IMR-90 (cell line): ENCODE measurements at regions of chr1 and their contacts with region 1.

Region 1: GRCh38 chr1:203558064-203558760 is 64.3 kb downstream of the OPTC start:
- DNase-seq: peak; percentile 100
- ATAC-seq: peak; percentile 69
- H3K4me3 ChIP-seq: no peak overlapping the region
- H3K27ac ChIP-seq: peak overlapping the region; percentile 92
- H3K4me1 ChIP-seq: peaks cover 35% of the 10 kb centered on the region
- H3K27me3 ChIP-seq: no peaks in the 10 kb centered on the region
- CTCF ChIP-seq: no peak
- POLR2A ChIP-seq: peak; percentile 76
- RAD21 ChIP-seq: peak; percentile 41

Region 2: DNA sequence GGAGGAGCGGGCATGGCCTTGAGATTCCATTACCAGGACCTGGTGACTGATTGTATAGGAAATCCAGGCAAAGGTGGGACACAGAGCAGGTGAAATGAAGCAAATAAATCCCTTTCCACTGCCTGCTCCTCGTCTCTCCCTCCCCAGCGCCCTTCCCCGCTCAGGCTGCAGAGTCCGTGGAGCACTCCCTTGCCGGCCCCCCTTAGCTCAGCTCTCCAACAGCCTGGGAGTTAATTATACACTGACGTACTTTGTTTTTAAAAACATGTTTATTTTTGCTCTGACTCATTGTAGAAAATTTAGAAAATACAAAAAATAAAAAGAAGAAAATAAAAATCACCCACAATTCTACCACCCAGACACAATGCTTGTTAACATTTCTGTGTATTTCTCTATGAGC is 1302.9 kb before region 1 on chr1:
- CTCF ChIA-PET with region 1: no interaction called
- POLR2A ChIA-PET with region 1: no interaction called
- dilution Hi-C with region 1: no loop called
- in situ Hi-C with region 1: no loop called
- intact Hi-C with region 1: no loop called
- DNase-seq: peak; percentile 34
- ATAC-seq: peak; percentile 90
- H3K4me3 ChIP-seq: no peak overlapping the region
- H3K27ac ChIP-seq: no peak overlapping the region
- H3K4me1 ChIP-seq: peaks cover 10% of the 10 kb centered on the region
- H3K27me3 ChIP-seq: peaks cover 36% of the 10 kb centered on the region
- CTCF ChIP-seq: no peak
- POLR2A ChIP-seq: no peak
- RAD21 ChIP-seq: no peak

Region 3: GRCh38 chr1:203504397-203505250 is 53.6 kb before region 1 on chr1:
- CTCF ChIA-PET with region 1: no interaction called
- POLR2A ChIA-PET with region 1: no interaction called
- dilution Hi-C with region 1: no loop called
- in situ Hi-C with region 1: no loop called
- intact Hi-C with region 1: loop called (anchors 2 kb)
- DNase-seq: peak; percentile 80
- ATAC-seq: peak; percentile 80
- H3K4me3 ChIP-seq: no peak overlapping the region
- H3K27ac ChIP-seq: no peak overlapping the region; the same call in 1 of the 2 replicates
- H3K4me1 ChIP-seq: peaks cover 28% of the 10 kb centered on the region
- H3K27me3 ChIP-seq: no peaks in the 10 kb centered on the region
- CTCF ChIP-seq: peak; percentile 83
- POLR2A ChIP-seq: peak; percentile 51; the same call in 1 of the 2 replicates
- RAD21 ChIP-seq: peak; percentile 89

Region 4: GRCh38 chr1:203512830-203513611 is 45.2 kb before region 1 on chr1:
- CTCF ChIA-PET with region 1: no interaction called
- POLR2A ChIA-PET with region 1: no interaction called
- dilution Hi-C with region 1: no loop called
- in situ Hi-C with region 1: no loop called
- intact Hi-C with region 1: loop called (anchors 2 kb)
- DNase-seq: peak; percentile 97
- ATAC-seq: peak; percentile 91
- H3K4me3 ChIP-seq: no peak overlapping the region
- H3K27ac ChIP-seq: peak overlapping the region; percentile 93
- H3K4me1 ChIP-seq: peaks cover 34% of the 10 kb centered on the region
- H3K27me3 ChIP-seq: no peaks in the 10 kb centered on the region
- CTCF ChIP-seq: no peak
- POLR2A ChIP-seq: peak; percentile 6; the same call in 1 of the 2 replicates
- RAD21 ChIP-seq: peak; percentile 48

Region 5: DNA sequence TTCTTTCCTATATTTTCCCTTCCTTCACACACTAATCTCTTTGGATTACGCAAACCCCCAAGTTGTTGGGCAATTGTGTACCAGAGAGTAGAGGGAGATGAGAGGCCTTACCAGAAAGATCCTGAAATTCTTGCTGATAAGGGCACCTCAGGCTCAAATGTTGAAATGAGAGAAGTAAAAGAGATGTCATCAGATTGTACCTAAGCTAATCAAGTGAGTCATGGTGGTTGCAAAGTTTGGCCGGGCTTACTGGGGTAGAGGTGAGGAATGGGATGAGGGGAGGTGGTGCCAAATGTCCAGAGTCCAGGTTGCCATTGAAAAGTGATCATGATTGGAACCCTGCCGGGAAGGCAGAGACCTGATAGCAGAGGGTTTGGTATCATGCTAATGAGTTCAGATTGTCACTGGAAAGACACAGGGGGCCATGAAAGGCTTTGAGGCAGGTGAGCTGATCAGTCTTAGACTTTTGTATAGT is 21.2 kb before region 1 on chr1:
- CTCF ChIA-PET with region 1: interaction called, 3 read pairs
- POLR2A ChIA-PET with region 1: no interaction called
- dilution Hi-C with region 1: no loop called
- in situ Hi-C with region 1: no loop called
- intact Hi-C with region 1: loop called (anchors 2 kb)
- DNase-seq: peak; percentile 89
- ATAC-seq: peak; percentile 33
- H3K4me3 ChIP-seq: no peak overlapping the region
- H3K27ac ChIP-seq: peak overlapping the region; percentile 73
- H3K4me1 ChIP-seq: peaks cover 30% of the 10 kb centered on the region
- H3K27me3 ChIP-seq: no peaks in the 10 kb centered on the region
- CTCF ChIP-seq: no peak
- POLR2A ChIP-seq: no peak
- RAD21 ChIP-seq: peak; percentile 11; the same call in 1 of the 2 replicates

Region 6: GRCh38 chr1:203609979-203610493 is 51.8 kb after region 1 on chr1:
- CTCF ChIA-PET with region 1: interaction called, 3 read pairs
- POLR2A ChIA-PET with region 1: no interaction called
- dilution Hi-C with region 1: no loop called
- in situ Hi-C with region 1: no loop called
- intact Hi-C with region 1: loop called (anchors 2 kb)
- DNase-seq: no peak
- ATAC-seq: no peak
- H3K4me3 ChIP-seq: no peak overlapping the region
- H3K27ac ChIP-seq: no peak overlapping the region
- H3K4me1 ChIP-seq: peaks cover 15% of the 10 kb centered on the region
- H3K27me3 ChIP-seq: no peaks in the 10 kb centered on the region
- CTCF ChIP-seq: no peak
- POLR2A ChIP-seq: no peak
- RAD21 ChIP-seq: no peak

Region 7: GRCh38 chr1:203625628-203626019 is 67.4 kb after region 1 on chr1:
- CTCF ChIA-PET with region 1: interaction called, 3 read pairs
- POLR2A ChIA-PET with region 1: interaction called, 3 read pairs
- dilution Hi-C with region 1: no loop called
- in situ Hi-C with region 1: no loop called
- intact Hi-C with region 1: loop called (anchors 1 kb)
- DNase-seq: no peak
- ATAC-seq: no peak
- H3K4me3 ChIP-seq: no peak overlapping the region
- H3K27ac ChIP-seq: no peak overlapping the region
- H3K4me1 ChIP-seq: peaks cover 17% of the 10 kb centered on the region
- H3K27me3 ChIP-seq: no peaks in the 10 kb centered on the region
- CTCF ChIP-seq: 0 out of 2 replicates have a peak, but pooled peaks have one; percentile 21
- POLR2A ChIP-seq: no peak
- RAD21 ChIP-seq: peak; percentile 33; the same call in 1 of the 2 replicates

Region 8: DNA sequence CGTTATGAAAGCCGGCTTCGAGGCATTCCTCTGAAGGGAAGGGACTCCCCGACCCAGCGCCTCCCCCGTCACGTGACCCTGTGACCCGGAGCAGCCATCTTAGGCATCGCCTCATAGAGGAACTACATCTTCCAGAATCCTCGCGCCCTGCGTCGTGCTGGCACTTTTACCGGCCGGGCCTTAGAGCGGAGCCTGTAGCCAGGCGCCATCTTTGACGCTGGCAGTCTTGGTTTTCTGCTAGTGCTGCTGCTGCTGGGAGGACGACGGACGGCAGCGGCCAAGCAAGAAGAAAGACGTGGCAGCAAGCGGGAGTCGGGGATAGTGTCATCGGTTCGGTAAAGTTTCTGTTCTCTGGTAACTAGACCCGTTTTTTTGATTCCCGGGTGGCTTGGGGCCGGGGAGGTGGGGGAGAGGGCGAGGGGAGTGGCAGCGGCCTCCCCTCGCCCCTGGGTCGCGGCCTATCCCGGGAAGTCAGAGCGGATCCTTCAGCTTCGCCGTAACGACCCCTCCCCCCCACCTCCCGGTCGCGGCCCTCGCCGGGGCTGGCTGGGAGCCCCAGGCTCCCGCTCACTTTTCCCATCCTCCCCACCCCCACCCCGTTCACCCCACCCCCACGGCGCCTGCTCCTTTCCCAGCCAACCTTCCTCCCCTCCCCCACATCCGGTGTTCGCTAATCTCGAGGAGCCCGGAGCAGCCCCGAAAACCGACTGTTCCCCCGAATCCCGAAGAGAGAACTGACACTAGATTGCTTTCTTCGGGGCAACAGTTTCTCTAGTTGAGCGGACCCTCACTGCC is 237.4 kb after region 1 on chr1 and contains the starts of genes ZBED6 and ZC3H11A:
- CTCF ChIA-PET with region 1: no interaction called
- POLR2A ChIA-PET with region 1: no interaction called
- dilution Hi-C with region 1: no loop called
- in situ Hi-C with region 1: no loop called
- intact Hi-C with region 1: loop called (anchors 5 kb)
- DNase-seq: peak; percentile 98
- ATAC-seq: peak; percentile 97
- H3K4me3 ChIP-seq: peak within 1 kb of the TSS; percentile 86
- H3K27ac ChIP-seq: peak within 1 kb of the TSS; percentile 81
- H3K4me1 ChIP-seq: peaks cover 12% of the 10 kb centered on the region
- H3K27me3 ChIP-seq: no peaks in the 10 kb centered on the region
- CTCF ChIP-seq: no peak
- POLR2A ChIP-seq: peak; percentile 88
- RAD21 ChIP-seq: no peak
- total RNA-seq, gene ZBED6: 16.1 and 26.2 TPM in 2 replicates
- total RNA-seq, gene ZC3H11A: 66.5 and 106 TPM in 2 replicates